CD4-positive, alpha-beta memory T cell (primary cell): ENCODE measurements at regions of chr1 and their contacts with region 1.

Region 1: DNA sequence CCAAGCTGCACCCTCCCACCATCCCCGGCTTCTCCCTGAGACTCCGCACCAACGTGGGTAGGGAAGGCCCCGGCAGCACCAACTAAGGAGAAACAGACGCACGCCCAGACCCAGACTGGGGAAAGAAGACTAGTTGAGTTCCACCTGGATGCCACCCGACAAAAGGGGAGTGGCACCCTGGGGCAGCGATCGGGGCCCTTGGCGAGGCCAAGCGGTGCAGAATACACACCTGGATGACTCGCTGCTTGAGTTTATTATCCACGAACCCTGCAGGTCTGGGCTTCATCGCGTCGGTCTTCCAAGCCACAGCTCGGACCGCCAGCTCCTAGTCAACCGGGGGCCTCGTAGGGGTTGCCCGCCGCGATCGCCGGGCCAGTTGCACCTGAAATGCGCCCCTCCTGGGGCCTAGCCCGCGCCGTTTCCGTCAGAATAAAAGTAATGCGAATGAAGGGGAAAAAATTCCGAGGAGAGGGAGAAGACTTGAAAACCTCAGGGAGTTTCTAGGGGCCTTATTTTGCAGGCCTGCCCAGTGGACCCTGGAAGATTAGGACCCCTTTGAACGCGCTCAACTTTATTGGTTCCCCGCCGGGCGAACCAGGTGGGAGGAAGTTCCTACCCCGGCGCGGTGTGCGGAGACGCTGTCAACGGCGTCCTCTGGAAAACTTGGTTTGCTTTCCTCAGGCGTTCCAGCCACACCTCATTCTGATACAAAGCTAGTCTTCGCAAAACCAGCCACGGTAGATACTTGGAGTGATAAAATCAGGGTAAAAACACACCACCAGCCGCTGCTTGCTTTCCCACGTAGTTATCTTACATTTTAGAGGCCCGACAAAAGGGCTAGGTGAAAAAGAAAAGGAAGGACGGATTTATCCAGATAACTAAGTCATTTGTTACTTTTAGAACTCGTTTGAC is at the start of gene NVL:
- DNase-seq: peak; percentile 82 to 85 (median 84)
- H3K4me3 ChIP-seq: peak within 1 kb of the TSS; percentile 85 to 99
- H3K4me3 Mint-ChIP-seq: peak within 1 kb of the TSS; percentile 91 to 99 (median 98)
- H3K27ac ChIP-seq: peak within 1 kb of the TSS; percentile 75
- H3K27ac Mint-ChIP-seq: peak within 1 kb of the TSS; percentile 95 to 99 (median 99)
- H3K4me1 ChIP-seq: peaks cover 49% of the 10 kb centered on the region
- H3K4me1 Mint-ChIP-seq: peaks cover 31 to 59% (median 43%) of the 10 kb centered on the region in 4 donors
- H3K27me3 ChIP-seq: no peaks in the 10 kb centered on the region
- H3K27me3 Mint-ChIP-seq: no peaks in the 10 kb centered on the region
- total RNA-seq, gene NVL: 38.9 to 46.7 TPM

Region 2: GRCh38 chr1:223811634-223812415 is 518.3 kb before region 1 on chr1:
- CTCF ChIA-PET with region 1: no interaction called
- POLR2A ChIA-PET with region 1: interaction called, 3 read pairs
- intact Hi-C with region 1: loop called (anchors 5 kb)
- DNase-seq: peak in 4 of 5 donors; percentile 40 to 51 (median 47)
- H3K4me3 ChIP-seq: no peak overlapping the region
- H3K4me3 Mint-ChIP-seq: no peak overlapping the region
- H3K27ac ChIP-seq: no peak overlapping the region
- H3K27ac Mint-ChIP-seq: peak overlapping the region in 3 of 7 donors; percentile 27 to 72 (median 57)
- H3K4me1 ChIP-seq: peaks cover 17% of the 10 kb centered on the region
- H3K4me1 Mint-ChIP-seq: peaks cover 23 to 37% (median 32%) of the 10 kb centered on the region in 4 donors
- H3K27me3 ChIP-seq: no peaks in the 10 kb centered on the region
- H3K27me3 Mint-ChIP-seq: no peaks in the 10 kb centered on the region

Region 3: GRCh38 chr1:224052772-224053171 is 277.3 kb before region 1 on chr1:
- CTCF ChIA-PET with region 1: interaction called, 9 read pairs
- POLR2A ChIA-PET with region 1: no interaction called
- intact Hi-C with region 1: loop called (anchors 2 kb)
- DNase-seq: no peak
- H3K4me3 ChIP-seq: no peak overlapping the region
- H3K4me3 Mint-ChIP-seq: no peak overlapping the region
- H3K27ac ChIP-seq: no peak overlapping the region
- H3K27ac Mint-ChIP-seq: no peak overlapping the region
- H3K4me1 ChIP-seq: peaks cover 5% of the 10 kb centered on the region
- H3K4me1 Mint-ChIP-seq: peaks cover 0 to 3% (median 1%) of the 10 kb centered on the region in 4 donors
- H3K27me3 ChIP-seq: no peaks in the 10 kb centered on the region
- H3K27me3 Mint-ChIP-seq: peaks cover 12 to 14% of the 10 kb centered on the region in 2 donors

Region 4: GRCh38 chr1:224168859-224169380 is 161.2 kb before region 1 on chr1:
- CTCF ChIA-PET with region 1: interaction called, 5 read pairs
- POLR2A ChIA-PET with region 1: interaction called, 3 read pairs
- intact Hi-C with region 1: loop called (anchors 1 kb)
- DNase-seq: peak; percentile 62 to 76 (median 68)
- H3K4me3 ChIP-seq: no peak overlapping the region
- H3K4me3 Mint-ChIP-seq: peak overlapping the region; percentile 21 to 80 (median 58)
- H3K27ac ChIP-seq: no peak overlapping the region
- H3K27ac Mint-ChIP-seq: peak overlapping the region; percentile 54 to 91 (median 80)
- H3K4me1 ChIP-seq: peaks cover 29% of the 10 kb centered on the region
- H3K4me1 Mint-ChIP-seq: peaks cover 23 to 38% (median 29%) of the 10 kb centered on the region in 4 donors
- H3K27me3 ChIP-seq: no peaks in the 10 kb centered on the region
- H3K27me3 Mint-ChIP-seq: no peaks in the 10 kb centered on the region

Region 5: GRCh38 chr1:224245188-224245587 is 84.9 kb before region 1 on chr1:
- CTCF ChIA-PET with region 1: interaction called, 4 read pairs
- POLR2A ChIA-PET with region 1: interaction called, 10 read pairs
- intact Hi-C with region 1: no loop called
- DNase-seq: peak in 4 of 5 donors; percentile 29 to 49 (median 39)
- H3K4me3 ChIP-seq: no peak overlapping the region
- H3K4me3 Mint-ChIP-seq: peak overlapping the region in 7 of 8 donors; percentile 12 to 69 (median 39)
- H3K27ac ChIP-seq: no peak overlapping the region
- H3K27ac Mint-ChIP-seq: peak overlapping the region; percentile 78 to 94 (median 87)
- H3K4me1 ChIP-seq: peaks cover 24% of the 10 kb centered on the region
- H3K4me1 Mint-ChIP-seq: peaks cover 15 to 31% (median 18%) of the 10 kb centered on the region in 4 donors
- H3K27me3 ChIP-seq: no peaks in the 10 kb centered on the region
- H3K27me3 Mint-ChIP-seq: no peaks in the 10 kb centered on the region

Region 6: GRCh38 chr1:224387302-224387912 is 57.3 kb after region 1 on chr1:
- CTCF ChIA-PET with region 1: interaction called, 4 read pairs
- POLR2A ChIA-PET with region 1: interaction called, 3 read pairs
- intact Hi-C with region 1: loop called (anchors 2 kb)
- DNase-seq: peak; percentile 45 to 68 (median 56)
- H3K4me3 ChIP-seq: no peak overlapping the region
- H3K4me3 Mint-ChIP-seq: peak overlapping the region in 6 of 8 donors; percentile 25 to 68 (median 54)
- H3K27ac ChIP-seq: peak overlapping the region; percentile 37
- H3K27ac Mint-ChIP-seq: peak overlapping the region; percentile 54 to 92 (median 83)
- H3K4me1 ChIP-seq: peaks cover 49% of the 10 kb centered on the region
- H3K4me1 Mint-ChIP-seq: peaks cover 35 to 48% (median 41%) of the 10 kb centered on the region in 4 donors
- H3K27me3 ChIP-seq: no peaks in the 10 kb centered on the region
- H3K27me3 Mint-ChIP-seq: no peaks in the 10 kb centered on the region

Region 7: DNA sequence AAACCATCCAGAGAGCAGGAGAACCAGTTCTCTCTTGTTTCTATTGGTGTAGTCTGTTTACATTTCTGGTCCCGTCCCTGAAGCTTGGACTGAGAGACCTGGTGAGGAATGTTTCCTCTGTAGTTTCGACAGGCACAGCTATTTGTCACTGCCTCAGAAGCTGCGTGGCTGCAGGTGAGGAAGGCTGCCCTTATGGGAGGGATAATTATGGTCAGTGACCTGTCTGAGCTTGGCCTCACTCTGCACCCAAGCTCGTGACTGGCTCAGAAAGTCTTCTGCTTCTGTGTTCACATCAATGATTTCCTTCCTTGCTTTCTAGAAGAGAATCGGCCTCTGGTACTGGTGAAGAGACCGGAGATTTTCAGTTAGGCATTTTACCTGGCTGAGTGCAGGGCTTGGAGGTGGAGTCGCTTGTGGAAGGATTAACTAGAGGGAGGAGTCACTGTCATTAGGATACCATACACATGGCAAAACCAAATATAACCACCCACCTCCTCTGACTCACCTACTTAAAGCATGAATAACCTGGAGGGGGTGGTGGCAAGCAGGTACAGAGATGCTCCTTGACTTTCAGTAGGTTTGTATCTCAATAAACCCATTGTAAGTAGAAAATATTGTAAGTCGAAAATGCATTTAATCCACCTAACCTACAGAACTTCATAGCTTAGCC is 124.4 kb after region 1 on chr1:
- CTCF ChIA-PET with region 1: interaction called, 26 read pairs
- POLR2A ChIA-PET with region 1: no interaction called
- intact Hi-C with region 1: loop called (anchors 1 kb)
- DNase-seq: no peak
- H3K4me3 ChIP-seq: no peak overlapping the region
- H3K4me3 Mint-ChIP-seq: no peak overlapping the region
- H3K27ac ChIP-seq: no peak overlapping the region
- H3K27ac Mint-ChIP-seq: peak overlapping the region in 4 of 7 donors; percentile 14 to 74 (median 60)
- H3K4me1 ChIP-seq: peaks cover 14% of the 10 kb centered on the region
- H3K4me1 Mint-ChIP-seq: peaks cover 10 to 24% (median 17%) of the 10 kb centered on the region in 4 donors
- H3K27me3 ChIP-seq: no peaks in the 10 kb centered on the region
- H3K27me3 Mint-ChIP-seq: no peaks in the 10 kb centered on the region

Region 8: DNA sequence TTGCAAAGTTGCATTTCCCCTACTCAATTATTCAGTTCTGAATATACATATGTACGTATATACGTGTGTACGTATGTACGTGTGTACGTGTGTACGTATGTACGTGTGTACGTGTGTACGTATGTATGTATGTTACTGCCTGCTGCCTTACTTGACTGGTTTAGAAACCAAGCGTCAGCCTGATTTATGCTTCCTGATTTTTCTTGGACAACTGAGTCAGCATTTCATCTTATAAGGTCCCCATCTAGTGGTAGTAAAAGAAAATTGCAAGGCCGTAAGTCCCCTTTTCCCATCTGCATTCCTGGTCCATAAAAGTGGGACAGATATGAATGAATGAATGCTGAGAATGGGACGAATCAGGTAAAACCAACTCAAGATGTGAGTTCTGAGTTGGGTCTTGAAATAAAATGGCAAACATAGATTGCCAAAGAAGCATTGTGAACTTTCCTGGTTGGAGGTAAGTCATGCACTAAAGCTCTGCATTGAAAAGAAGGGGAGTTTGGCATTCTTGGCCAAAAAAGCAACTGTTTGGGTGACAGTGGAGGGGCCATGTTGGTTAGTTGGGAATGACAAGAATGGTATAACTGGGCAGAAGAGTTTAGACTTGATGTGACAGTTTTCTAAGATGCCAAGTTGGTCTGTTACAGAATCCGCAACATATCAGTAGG is 522.9 kb after region 1 on chr1:
- CTCF ChIA-PET with region 1: no interaction called
- POLR2A ChIA-PET with region 1: no interaction called
- intact Hi-C with region 1: no loop called
- DNase-seq: no peak
- H3K4me3 ChIP-seq: no peak overlapping the region
- H3K4me3 Mint-ChIP-seq: no peak overlapping the region
- H3K27ac ChIP-seq: no peak overlapping the region
- H3K27ac Mint-ChIP-seq: no peak overlapping the region
- H3K4me1 ChIP-seq: no peaks in the 10 kb centered on the region
- H3K4me1 Mint-ChIP-seq: peaks cover 0 to 1% (median 0%) of the 10 kb centered on the region in 4 donors
- H3K27me3 ChIP-seq: no peaks in the 10 kb centered on the region
- H3K27me3 Mint-ChIP-seq: peaks cover 3 to 4% of the 10 kb centered on the region in 2 donors